ENCODE measurements at regions of chr6 and their contacts with region 1.

Region 1: GRCh38 chr6:34301408-34301807 is 52.6 kb upstream of the SMIM29 start:
- DNase-seq: peak in 1 of 2 donors; percentile 91
- ATAC-seq: peak; percentile 90
- H3K4me3 ChIP-seq: no peak overlapping the region
- H3K27ac ChIP-seq: no peak overlapping the region
- H3K4me1 ChIP-seq: no peaks in the 10 kb centered on the region
- H3K27me3 ChIP-seq: no peaks in the 10 kb centered on the region

Region 2: DNA sequence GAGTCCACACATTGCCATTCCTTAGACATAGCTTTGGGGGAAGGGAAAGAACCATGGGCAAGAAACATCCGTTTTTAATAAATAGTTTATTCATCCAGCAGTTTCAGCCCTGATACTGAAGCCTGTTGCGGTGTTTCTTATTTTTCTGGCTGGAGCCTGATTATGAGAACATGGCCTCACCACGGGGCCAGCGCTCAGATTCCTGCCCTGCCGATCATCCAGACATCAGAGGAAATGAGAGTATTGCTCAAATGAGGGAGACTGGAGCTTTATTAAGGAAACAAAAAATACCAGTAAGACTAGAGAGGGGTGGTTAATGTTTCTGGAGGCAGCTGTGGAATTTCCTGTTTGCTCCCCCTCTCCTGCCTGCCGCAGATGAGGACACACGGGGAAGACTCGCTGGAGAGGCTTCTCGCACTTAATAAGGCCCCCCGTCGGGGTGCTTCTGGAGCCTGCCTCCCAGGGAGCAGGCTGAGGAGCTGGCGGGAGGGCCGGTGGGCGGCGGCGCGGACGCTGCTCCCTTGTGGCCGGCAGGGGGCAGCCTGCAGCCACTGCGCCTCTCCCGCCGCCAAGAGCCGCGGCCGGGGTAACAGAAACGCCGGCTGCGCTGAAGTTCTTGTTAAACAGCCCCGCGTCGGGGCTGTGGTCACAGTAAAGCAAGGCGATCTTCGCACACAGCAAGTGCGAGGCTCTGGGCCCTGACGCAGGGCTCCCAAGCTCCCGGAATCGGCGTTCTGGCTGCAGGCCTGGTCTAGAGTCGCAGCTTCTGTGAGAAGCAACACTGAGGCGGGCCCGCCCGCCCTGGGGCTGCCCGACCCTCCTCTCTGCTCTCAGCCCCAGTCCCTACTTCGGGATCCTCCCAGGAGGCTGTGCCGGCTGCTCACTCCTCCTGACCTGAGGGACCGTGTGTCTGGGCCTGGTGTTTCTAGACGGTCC is 530.0 kb before region 1 on chr6:
- intact Hi-C with region 1: no loop called
- DNase-seq: peak; percentile 80 to 91
- ATAC-seq: peak; percentile 93
- H3K4me3 ChIP-seq: no peak overlapping the region
- H3K27ac ChIP-seq: peak overlapping the region; percentile 20 to 66
- H3K4me1 ChIP-seq: no peaks in the 10 kb centered on the region
- H3K27me3 ChIP-seq: no peaks in the 10 kb centered on the region

Region 3: DNA sequence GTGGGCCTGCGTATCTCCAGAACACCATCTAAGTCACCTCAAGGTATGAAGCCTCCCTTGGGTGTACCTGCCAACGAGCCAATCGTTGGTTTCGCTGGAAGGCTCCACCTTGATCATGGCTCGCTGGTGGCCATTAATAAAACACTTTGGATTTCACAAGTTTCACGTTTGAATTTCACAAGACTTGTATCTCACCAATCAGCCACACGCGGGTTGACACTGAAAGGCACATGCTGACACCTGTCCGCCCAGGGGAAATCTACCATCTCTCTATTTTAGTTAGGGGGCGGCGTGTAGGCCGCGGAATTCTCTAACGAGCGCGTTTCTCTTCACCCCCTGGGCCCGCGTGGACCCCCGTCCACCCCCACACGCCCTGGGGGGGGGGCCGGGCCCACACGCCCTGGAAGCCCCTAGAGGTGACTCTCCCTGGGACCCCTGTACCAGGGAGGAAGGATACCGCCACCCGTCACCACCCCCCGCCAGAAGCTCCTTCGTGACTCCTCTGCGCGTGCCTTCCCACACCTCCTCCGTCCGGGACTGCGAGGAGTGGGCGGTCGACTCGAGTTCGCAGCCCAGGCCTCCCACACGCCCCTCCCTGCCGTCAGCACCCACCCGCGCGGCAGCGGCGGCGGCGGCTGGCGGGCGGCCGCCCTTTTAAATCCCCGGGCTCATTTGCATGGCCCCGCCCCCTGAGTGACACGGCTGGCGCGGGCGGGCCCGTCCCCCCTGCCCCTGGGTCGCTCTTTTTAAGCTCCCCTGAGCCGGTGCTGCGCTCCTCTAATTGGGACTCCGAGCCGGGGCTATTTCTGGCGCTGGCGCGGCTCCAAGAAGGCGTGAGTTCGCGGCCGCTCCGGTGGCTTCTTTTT is 65.0 kb before region 1 on chr6 and contains the start of gene HMGA1:
- intact Hi-C with region 1: no loop called
- DNase-seq: peak; percentile 92 to 95
- ATAC-seq: peak; percentile 93
- H3K4me3 ChIP-seq: peak within 1 kb of the TSS; percentile 81 to 89
- H3K27ac ChIP-seq: peak within 1 kb of the TSS; percentile 21 to 67
- H3K4me1 ChIP-seq: no peaks in the 10 kb centered on the region
- H3K27me3 ChIP-seq: peaks cover 0 to 2% of the 10 kb centered on the region in 2 donors
- total RNA-seq, gene HMGA1: 18.0 to 19.2 TPM

Region 4: GRCh38 chr6:34324738-34325444 is 23.5 kb after region 1 on chr6:
- intact Hi-C with region 1: no loop called
- DNase-seq: peak in 1 of 2 donors; percentile 59
- ATAC-seq: peak; percentile 68
- H3K4me3 ChIP-seq: no peak overlapping the region
- H3K27ac ChIP-seq: peak overlapping the region in 1 of 2 donors; percentile 17
- H3K4me1 ChIP-seq: no peaks in the 10 kb centered on the region
- H3K27me3 ChIP-seq: no peaks in the 10 kb centered on the region

Region 5: DNA sequence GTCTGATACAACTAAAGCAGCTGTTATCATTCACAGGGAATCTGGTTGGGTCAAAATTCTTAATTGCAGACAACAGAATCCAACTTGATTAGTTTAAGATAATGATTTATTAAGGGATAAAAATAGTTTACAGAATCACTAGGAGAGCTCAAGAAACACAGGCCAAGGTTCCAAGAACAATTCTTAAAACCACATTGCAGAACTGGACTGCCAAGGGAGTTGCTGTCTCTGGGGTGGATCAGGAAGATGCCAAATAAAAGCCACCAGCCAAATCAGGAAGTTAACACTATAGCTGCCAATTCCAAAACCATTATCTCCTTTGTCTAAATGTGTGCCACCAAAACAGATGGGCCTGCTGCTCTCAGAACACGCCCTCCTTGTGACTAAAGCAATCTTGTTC is 37.4 kb after region 1 on chr6:
- intact Hi-C with region 1: loop called in 1 of 2 experiments (anchors 5 kb)
- DNase-seq: no peak
- ATAC-seq: no peak
- H3K4me3 ChIP-seq: no peak overlapping the region
- H3K27ac ChIP-seq: no peak overlapping the region
- H3K4me1 ChIP-seq: peaks cover 14 to 23% of the 10 kb centered on the region in 2 donors
- H3K27me3 ChIP-seq: no peaks in the 10 kb centered on the region

Region 6: DNA sequence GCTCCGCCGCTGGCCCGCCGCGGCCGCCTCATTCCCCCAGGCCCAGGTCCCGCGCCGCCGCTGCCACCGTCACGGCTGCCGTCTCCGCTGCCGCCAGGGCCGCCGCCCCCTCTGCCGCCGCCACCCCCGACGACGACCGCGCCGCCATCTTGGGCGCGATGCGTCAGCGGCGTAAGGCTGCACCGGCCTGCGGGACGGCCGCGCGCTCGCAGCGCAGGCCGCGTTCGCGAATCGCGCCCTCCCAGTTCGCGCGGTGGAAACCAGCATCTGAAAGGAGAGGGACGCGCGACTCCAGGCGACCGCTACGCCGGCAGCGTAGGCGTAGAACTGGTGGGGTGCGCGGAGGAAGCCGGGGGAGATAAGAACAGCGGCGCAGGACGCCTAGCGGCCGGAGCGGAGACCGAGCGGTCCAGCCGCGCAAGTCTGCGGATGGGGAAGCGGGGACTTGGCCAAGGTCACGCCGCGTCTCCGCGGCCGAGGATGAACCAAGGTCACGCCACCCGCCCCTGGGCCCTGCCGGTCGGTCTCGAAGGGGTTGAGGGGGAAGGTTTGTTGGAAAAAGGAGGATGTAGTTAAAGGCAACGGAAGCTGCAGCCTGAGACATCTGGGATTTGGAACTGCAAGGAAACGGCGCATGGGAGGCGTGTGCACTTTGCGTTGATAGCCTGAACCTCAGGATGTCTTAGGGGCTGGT is 91.2 kb after region 1 on chr6 and contains the start of gene NUDT3:
- intact Hi-C with region 1: loop called (anchors 1 to 5 kb)
- DNase-seq: peak; percentile 97 to 99
- ATAC-seq: peak; percentile 96
- H3K4me3 ChIP-seq: peak within 1 kb of the TSS; percentile 57 to 76
- H3K27ac ChIP-seq: peak within 1 kb of the TSS; percentile 15 to 60
- H3K4me1 ChIP-seq: no peaks in the 10 kb centered on the region
- H3K27me3 ChIP-seq: no peaks in the 10 kb centered on the region
- total RNA-seq, gene NUDT3: 47.3 to 50.2 TPM